Dendritic cell treated with granulocyte-macrophage colony-stimulating factor and Interleukin-4, amounts not matched to agents 40 ng/mL and 50 ng/mL, for 4 days (primary cell): ENCODE measurements at regions of chr11 and their contacts with region 1.

Region 1: GRCh38 chr11:116972691-116973090 is 125.5 kb downstream of the SIK3 start:
- H3K4me3 Mint-ChIP-seq: no peak overlapping the region
- H3K27ac Mint-ChIP-seq: no peak overlapping the region
- H3K4me1 Mint-ChIP-seq: peaks cover 30% of the 10 kb centered on the region
- H3K27me3 Mint-ChIP-seq: no peaks in the 10 kb centered on the region

Region 2: GRCh38 chr11:117005758-117006157 is 33.1 kb after region 1 on chr11:
- intact Hi-C with region 1: loop called (anchors 5 kb)
- H3K4me3 Mint-ChIP-seq: no peak overlapping the region
- H3K27ac Mint-ChIP-seq: peak overlapping the region; percentile 47
- H3K4me1 Mint-ChIP-seq: peaks cover 52% of the 10 kb centered on the region
- H3K27me3 Mint-ChIP-seq: no peaks in the 10 kb centered on the region

Region 3: DNA sequence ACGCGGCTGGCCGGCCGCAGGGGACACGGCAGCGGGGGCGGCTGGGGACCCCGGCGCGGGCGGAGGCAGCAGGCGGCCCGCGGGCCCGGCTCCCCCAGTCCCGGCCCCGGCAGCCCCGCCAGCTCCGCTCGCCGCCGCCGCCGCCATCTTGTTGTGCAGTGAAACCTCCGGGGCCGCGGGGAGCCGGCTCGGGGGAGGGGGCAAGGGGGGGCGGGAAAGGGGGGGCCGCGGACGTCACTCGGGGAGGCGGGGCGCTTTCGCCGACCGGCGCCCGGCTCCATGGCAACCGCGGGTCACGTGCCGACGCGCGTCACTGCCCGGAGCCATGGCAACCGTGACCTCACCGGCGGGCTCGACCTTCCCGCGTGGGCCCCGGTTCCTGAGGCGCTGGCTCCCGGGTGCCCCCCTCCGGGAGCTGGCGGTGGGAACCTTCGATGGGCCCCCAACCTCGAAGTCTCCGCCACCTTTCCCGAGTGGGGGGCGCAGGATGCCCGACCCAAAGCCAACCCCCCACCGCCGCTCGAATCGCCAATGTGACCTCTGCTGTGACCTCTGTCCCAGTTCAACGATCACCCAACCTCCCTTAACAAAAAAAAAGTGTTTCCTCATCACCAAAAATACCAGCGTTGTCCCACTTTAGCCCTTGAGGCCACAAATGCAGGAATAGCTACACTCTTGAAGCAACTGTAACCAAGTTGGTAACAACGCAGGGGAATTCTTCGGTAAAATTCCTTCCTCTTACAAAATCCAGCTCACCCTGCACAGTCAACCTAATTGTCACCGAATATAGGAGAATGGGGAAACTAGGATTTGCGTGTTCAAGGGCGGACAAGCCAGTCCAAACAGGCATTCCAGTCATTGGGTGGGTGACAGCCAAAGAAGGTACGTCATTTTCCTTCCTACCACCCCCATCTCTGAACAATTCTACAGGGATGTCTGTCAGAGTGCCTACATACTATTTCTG is 125.9 kb after region 1 on chr11 and contains the start of gene SIK3:
- intact Hi-C with region 1: no loop called
- H3K4me3 Mint-ChIP-seq: peak within 1 kb of the TSS; percentile 91
- H3K27ac Mint-ChIP-seq: peak within 1 kb of the TSS; percentile 100
- H3K4me1 Mint-ChIP-seq: peaks cover 41% of the 10 kb centered on the region
- H3K27me3 Mint-ChIP-seq: no peaks in the 10 kb centered on the region